PC-9 (cell line): ENCODE measurements at regions of chr11 and their contacts with region 1.

Region 1: DNA sequence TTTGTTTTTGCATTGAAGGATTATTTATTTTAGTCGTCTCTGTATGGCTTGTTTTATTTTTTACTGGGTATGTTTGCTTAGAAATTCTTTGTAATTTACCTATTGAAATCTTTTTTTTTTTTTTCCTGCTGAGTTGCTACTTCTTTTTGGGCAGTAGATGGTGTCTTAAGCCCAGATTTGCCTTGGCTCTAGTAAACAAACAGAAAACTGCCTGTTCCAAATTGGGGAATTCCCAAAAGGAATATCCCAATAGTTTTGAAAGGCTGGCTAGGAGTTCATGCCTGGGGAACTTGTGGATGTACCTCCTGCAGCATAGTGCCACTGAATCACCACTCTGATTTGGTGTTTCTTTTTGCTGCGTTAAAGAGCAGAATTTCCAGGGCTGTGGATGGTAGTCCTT is 17.7 kb downstream of the PAMR1 start:
- DNase-seq: no peak
- H3K4me3 ChIP-seq: no peak overlapping the region
- H3K27ac ChIP-seq: no peak overlapping the region
- H3K4me1 ChIP-seq: no peaks in the 10 kb centered on the region
- H3K27me3 ChIP-seq: peaks cover 6% of the 10 kb centered on the region; the same call in 1 of the 2 replicates
- CTCF ChIP-seq: peak; percentile 32; the same call in 1 of the 2 replicates

Region 2: DNA sequence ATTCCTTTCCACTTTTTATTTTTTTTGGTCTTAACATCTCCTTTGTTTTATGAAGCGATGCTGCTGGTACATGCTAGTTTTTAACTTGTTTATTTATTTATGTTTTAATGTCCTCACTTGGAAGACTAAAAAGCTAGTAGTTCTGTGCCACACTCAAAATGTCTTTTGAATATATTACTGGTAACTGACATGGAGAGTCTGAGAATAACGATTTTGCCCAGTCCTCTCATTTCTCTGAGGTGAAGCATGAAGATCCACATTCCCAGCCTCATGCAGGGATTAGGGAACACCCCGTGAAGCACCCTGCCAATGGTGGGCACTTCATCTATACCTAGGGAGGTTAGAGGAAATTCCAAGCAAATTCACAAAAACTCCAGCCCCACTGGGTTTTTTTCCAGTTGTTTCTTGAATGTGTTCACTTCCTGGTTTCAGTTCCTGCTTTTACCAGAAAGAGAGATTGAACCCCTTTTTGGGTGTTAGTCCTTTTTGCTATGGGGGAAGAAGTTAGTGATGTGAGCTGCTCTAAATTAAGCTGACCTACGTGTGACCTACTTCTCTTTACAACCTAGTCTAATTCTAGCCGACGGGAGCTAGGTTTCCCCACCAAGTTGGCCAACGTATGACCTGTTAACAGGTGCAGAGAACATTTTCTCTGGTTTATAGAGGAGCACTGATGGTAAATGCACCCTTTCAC is 194.5 kb before region 1 on chr11:
- CTCF ChIA-PET with region 1: no interaction called
- POLR2A ChIA-PET with region 1: no interaction called
- intact Hi-C with region 1: no loop called
- DNase-seq: no peak
- H3K4me3 ChIP-seq: no peak overlapping the region
- H3K27ac ChIP-seq: no peak overlapping the region
- H3K4me1 ChIP-seq: no peaks in the 10 kb centered on the region
- H3K27me3 ChIP-seq: no peaks in the 10 kb centered on the region
- CTCF ChIP-seq: no peak

Region 3: GRCh38 chr11:35938231-35938630 is 430.5 kb after region 1 on chr11:
- CTCF ChIA-PET with region 1: no interaction called
- POLR2A ChIA-PET with region 1: interaction called, 16 read pairs
- intact Hi-C with region 1: no loop called
- DNase-seq: peak in 1 of 2 experiments; percentile 38
- H3K4me3 ChIP-seq: no peak overlapping the region
- H3K27ac ChIP-seq: no peak overlapping the region
- H3K4me1 ChIP-seq: peaks cover 8% of the 10 kb centered on the region
- H3K27me3 ChIP-seq: no peaks in the 10 kb centered on the region
- CTCF ChIP-seq: no peak

Region 4: GRCh38 chr11:35980686-35981390 is 473.1 kb after region 1 on chr11:
- CTCF ChIA-PET with region 1: interaction called, 12 read pairs
- POLR2A ChIA-PET with region 1: no interaction called
- intact Hi-C with region 1: no loop called
- DNase-seq: no peak
- H3K4me3 ChIP-seq: no peak overlapping the region
- H3K27ac ChIP-seq: no peak overlapping the region
- H3K4me1 ChIP-seq: no peaks in the 10 kb centered on the region
- H3K27me3 ChIP-seq: no peaks in the 10 kb centered on the region
- CTCF ChIP-seq: no peak

Region 5: DNA sequence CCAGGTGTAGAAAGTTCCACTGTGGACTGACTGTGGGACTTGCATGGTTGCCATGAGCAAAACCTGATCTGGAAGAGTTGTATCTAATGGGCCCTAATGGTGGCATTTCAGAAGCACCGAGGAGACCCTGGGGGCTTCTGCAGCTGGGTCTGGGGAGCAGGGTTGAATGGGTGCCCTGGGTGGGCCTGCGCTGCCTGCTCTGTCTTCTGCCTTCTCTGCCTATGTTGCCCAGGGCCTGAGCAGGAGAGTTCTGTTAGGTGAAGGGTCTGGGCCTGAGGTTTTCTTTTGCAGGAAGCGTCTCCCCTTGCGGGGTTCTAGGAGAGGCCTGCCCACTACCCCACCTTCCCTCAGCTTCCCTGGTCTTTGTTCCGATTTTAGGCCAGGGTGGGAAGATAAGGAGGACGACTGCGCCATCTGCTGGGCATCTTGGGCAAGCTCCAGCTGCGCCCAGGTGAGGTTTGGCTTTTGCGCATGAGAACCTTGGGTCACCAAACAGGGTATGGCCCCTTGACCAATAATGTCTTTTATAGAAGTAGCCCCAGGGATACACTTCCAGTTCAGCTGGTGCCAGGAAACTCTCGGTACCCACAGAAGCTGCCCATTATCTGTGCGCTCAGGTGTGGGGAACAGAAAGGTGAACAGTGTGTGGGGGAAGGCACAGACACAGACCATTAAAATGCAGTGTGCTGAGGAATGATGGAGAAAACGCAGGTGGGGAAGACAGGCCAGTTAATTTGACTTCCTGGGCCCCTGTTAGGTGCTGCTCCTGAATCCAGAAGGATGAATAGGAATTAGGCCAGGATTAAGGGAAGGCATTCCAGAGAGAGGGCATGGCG is 758.3 kb after region 1 on chr11:
- CTCF ChIA-PET with region 1: no interaction called
- POLR2A ChIA-PET with region 1: interaction called, 15 read pairs
- intact Hi-C with region 1: no loop called
- DNase-seq: peak; percentile 46 to 63
- H3K4me3 ChIP-seq: no peak overlapping the region
- H3K27ac ChIP-seq: no peak overlapping the region
- H3K4me1 ChIP-seq: no peaks in the 10 kb centered on the region
- H3K27me3 ChIP-seq: no peaks in the 10 kb centered on the region
- CTCF ChIP-seq: peak; percentile 97